BJ (cell line): ENCODE measurements at regions of chr9 and their contacts with region 1.

Region 1: DNA sequence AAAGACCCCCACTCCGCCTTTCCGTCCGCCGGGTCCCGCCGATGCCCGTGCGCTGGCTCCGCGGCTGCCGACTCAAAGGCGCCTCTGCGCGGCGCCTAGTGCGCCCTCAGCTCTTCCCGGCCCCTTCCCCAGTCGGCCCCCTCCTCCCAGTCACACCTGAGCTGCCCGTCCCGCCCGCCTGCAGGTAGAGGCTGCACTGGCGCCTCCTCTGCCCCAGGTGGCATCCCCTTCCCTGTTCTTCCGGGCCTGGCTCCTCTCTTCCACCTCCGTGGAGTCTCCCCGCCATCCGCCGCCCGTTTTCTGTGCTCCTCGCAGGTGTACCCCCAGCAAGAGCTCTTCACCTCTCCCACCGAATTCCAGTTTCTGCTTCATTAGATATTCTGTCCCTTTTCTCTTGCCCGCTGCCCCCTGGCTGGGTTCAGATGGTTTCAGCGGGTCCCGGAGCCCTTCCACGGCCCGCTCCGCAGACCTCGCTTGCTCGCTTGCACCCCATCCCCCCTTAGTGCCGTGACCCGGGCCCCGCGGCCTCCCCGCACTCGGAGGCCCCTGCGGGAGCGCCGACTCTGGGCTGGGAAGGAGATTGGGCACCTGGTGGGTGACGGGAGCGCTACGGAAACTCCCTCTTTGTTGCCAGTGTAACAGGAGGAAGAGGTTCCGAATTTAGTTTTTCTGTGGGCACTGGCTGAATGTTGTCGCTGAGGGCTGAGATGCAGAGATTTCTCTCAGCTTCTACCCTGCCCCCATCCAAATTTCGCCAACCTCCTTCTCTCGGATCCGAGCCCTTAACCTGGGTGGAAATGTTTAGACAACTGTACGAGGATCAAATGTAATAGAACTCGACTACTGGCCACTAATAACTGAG is 809 bp downstream of the SLC44A1 start:
- DNase-seq: no peak
- H3K4me3 ChIP-seq: peak overlapping the region; percentile 92
- H3K27me3 ChIP-seq: no peaks in the 10 kb centered on the region; the same call in 1 of the 2 replicates
- CTCF ChIP-seq: 0 out of 2 replicates have a peak, but pooled peaks have one; percentile 5

Region 2: GRCh38 chr9:105255421-105255820 is 10.2 kb after region 1 on chr9:
- CTCF ChIA-PET with region 1: interaction called, 13 read pairs
- POLR2A ChIA-PET with region 1: interaction called, 4 read pairs
- DNase-seq: no peak
- H3K4me3 ChIP-seq: no peak overlapping the region
- H3K27me3 ChIP-seq: no peaks in the 10 kb centered on the region
- CTCF ChIP-seq: no peak